CD8-positive, alpha-beta T cell (primary cell): ENCODE measurements at regions of chr11 and their contacts with region 1.

Region 1: DNA sequence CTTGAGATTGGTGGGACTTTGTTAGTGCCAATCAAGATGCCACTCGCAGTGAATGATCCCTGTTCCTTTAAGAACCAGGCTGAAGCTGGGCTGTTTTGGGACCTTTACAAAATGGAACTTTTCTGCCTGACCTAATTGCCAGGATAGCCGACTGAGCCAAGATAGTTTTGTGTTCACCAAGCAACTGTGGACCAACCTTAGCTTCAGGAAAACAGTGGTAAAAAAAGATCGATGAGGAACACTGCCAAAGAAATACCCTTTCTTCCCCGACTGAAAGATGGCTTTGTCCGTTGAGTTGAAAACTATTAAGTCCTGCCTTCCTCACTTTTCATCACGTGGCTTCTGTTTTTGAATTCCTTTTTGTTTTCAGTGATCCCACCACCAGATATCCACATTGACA is 157.9 kb upstream of the SORL1-AS1 start:
- DNase-seq: no peak
- ATAC-seq: no peak
- H3K4me3 ChIP-seq: no peak overlapping the region
- H3K4me3 Mint-ChIP-seq: no peak overlapping the region
- H3K27ac ChIP-seq: no peak overlapping the region
- H3K27ac Mint-ChIP-seq: no peak overlapping the region
- H3K4me1 ChIP-seq: no peaks in the 10 kb centered on the region
- H3K4me1 Mint-ChIP-seq: no peaks in the 10 kb centered on the region
- H3K27me3 ChIP-seq: no peaks in the 10 kb centered on the region
- H3K27me3 Mint-ChIP-seq: no peaks in the 10 kb centered on the region
- CTCF ChIP-seq: no peak

Region 2: DNA sequence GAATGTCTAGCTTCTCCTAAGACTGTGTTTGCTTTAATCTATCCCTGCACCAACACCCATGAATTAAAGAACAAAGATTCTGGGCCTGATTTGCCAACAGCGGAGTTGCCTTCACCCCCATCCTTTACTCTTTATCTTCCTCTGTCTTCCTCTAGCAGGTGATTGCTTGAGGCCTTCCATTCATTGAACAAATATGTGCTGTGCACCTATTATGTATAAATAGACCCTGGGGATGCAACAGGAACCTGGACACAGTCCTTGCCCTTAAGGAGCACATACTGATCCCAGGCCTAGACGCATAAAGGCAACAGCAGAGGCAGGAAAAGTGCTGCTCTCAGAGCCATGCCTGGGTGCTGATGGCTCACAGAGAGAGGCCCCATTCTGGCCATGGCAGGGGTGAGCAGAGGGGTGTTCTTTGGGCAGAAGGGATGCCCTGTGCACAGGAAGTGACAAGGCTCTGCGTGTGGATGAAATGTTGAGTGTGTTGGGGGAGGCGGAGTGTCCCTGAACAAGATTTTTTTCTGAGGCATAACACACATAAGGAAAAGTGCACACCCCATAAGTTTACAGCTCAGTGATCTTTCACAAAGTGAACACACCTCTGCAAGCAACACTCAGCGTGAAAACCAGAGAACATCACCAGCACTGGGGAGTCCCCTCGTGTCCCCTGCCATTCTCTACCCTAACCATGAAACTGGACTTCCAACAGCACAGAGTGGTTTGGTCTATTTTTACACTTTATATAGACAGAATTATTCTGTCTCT is 953.2 kb before region 1 on chr11:
- CTCF ChIA-PET with region 1: no interaction called
- POLR2A ChIA-PET with region 1: no interaction called
- intact Hi-C with region 1: loop called in 1 of 2 experiments (anchors 5 kb)
- DNase-seq: no peak
- ATAC-seq: no peak
- H3K4me3 ChIP-seq: no peak overlapping the region
- H3K4me3 Mint-ChIP-seq: no peak overlapping the region
- H3K27ac ChIP-seq: no peak overlapping the region
- H3K27ac Mint-ChIP-seq: no peak overlapping the region
- H3K4me1 ChIP-seq: no peaks in the 10 kb centered on the region
- H3K4me1 Mint-ChIP-seq: no peaks in the 10 kb centered on the region
- H3K27me3 ChIP-seq: no peaks in the 10 kb centered on the region
- H3K27me3 Mint-ChIP-seq: peaks cover 12% of the 10 kb centered on the region
- CTCF ChIP-seq: no peak

Region 3: GRCh38 chr11:121625777-121626506 is 15.2 kb after region 1 on chr11:
- CTCF ChIA-PET with region 1: no interaction called
- POLR2A ChIA-PET with region 1: interaction called, 3 read pairs
- intact Hi-C with region 1: loop called in 1 of 2 experiments (anchors 1 kb)
- DNase-seq: no peak
- ATAC-seq: no peak
- H3K4me3 ChIP-seq: no peak overlapping the region
- H3K4me3 Mint-ChIP-seq: no peak overlapping the region
- H3K27ac ChIP-seq: no peak overlapping the region
- H3K27ac Mint-ChIP-seq: peak overlapping the region; percentile 49
- H3K4me1 ChIP-seq: no peaks in the 10 kb centered on the region
- H3K4me1 Mint-ChIP-seq: no peaks in the 10 kb centered on the region
- H3K27me3 ChIP-seq: no peaks in the 10 kb centered on the region
- H3K27me3 Mint-ChIP-seq: no peaks in the 10 kb centered on the region
- CTCF ChIP-seq: no peak